GM10248 (cell line): ENCODE measurements at regions of chr16 and their contacts with region 1.

Region 1: GRCh38 chr16:714558-715476 is at the start of gene METRN:
- DNase-seq: peak; percentile 92
- CTCF ChIP-seq: no peak

Region 2: GRCh38 chr16:700684-701584 is 13.9 kb before region 1 on chr16:
- CTCF ChIA-PET with region 1: interaction called, 13 read pairs
- POLR2A ChIA-PET with region 1: no interaction called
- DNase-seq: peak; percentile 54
- CTCF ChIP-seq: no peak

Region 3: DNA sequence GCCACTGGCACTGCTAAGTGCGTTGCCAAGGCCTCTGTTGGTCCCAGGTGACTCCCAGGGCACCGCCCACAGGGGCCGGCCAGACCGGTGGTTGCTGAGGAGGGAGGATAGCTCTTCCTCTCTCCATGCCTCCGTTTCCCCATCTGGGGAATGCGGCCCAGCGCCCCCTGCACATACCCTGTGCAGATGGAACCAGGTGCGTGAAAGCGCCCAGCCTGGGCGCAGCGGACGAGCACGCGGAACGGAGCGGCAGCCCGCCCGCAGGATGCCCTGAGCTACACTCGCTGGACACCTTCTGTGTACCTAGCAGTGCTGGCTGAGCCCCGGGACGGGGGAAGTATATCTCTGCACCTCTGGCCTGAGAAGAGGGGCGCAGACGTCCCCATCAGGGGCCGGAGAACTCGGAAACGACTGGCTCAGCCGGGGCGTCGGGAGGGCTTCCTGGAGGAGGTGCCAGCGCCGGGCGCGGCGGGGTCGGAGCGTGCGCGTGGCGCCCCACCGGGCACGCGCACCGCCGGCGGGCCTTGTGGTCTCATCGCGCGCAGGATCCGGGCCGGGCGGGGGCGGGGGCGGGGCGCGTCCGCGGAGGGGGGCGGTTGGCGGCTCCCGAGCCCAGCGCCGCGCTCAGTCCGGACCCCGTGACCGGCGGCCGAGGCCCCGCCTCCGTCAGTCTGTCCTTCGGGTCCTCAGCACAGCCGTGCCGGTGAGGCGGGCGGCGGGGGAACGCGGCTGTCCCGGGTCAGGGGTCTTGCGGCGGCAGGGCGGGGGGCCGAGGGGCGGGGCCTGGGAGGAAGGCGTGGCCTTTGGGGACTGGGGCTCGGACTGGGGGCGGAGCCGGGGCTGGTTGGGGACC is 11.8 kb after region 1 on chr16 and contains the starts of genes CCDC78 and HAGHL:
- CTCF ChIA-PET with region 1: interaction called, 59 read pairs
- POLR2A ChIA-PET with region 1: no interaction called
- DNase-seq: peak; percentile 81
- CTCF ChIP-seq: no peak

Region 4: DNA sequence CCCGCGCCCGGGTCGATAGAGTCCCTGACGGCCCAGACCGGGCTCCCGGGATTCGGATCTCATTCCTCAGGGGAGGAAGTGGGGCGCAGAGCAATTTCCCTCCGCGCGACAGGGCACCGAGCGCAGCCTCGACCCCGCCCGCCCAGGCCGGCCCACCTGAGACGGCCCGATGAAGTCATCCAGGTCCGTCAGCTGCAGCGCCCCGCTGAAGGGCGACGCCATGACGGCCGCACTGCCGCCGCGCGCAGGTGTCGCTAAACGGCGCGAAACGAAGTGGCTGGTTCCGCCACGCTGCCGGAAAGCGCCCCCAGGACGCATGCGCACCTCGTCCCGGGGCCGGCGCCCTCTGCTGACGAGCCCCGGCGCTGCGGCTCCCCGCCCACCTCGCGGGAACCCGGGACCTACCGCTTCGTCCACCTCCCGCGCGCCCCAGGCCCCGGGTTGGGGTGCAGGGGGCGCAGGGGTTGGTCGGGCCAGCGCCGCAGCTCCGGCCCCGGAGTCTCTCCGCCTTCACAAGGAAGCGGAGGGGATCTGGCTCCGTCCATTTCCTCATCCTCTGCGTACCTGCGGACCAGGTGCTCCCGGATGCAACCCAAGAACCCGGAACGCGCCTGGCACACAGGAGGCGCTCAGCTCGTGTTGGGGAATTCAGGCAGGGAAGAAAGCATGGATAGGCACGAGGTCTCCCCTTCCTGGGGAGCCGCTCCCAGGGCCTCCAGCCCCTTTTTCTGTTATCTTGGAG is 26.1 kb after region 1 on chr16 and contains the start of gene CIAO3:
- CTCF ChIA-PET with region 1: interaction called, 31 read pairs
- POLR2A ChIA-PET with region 1: no interaction called
- DNase-seq: peak; percentile 95
- CTCF ChIP-seq: peak; percentile 96

Region 5: GRCh38 chr16:788394-789126 is 73.7 kb after region 1 on chr16 and contains the start of gene CHTF18:
- CTCF ChIA-PET with region 1: interaction called, 169 read pairs
- POLR2A ChIA-PET with region 1: interaction called, 5 read pairs
- DNase-seq: peak; percentile 100
- CTCF ChIP-seq: no peak

Region 6: DNA sequence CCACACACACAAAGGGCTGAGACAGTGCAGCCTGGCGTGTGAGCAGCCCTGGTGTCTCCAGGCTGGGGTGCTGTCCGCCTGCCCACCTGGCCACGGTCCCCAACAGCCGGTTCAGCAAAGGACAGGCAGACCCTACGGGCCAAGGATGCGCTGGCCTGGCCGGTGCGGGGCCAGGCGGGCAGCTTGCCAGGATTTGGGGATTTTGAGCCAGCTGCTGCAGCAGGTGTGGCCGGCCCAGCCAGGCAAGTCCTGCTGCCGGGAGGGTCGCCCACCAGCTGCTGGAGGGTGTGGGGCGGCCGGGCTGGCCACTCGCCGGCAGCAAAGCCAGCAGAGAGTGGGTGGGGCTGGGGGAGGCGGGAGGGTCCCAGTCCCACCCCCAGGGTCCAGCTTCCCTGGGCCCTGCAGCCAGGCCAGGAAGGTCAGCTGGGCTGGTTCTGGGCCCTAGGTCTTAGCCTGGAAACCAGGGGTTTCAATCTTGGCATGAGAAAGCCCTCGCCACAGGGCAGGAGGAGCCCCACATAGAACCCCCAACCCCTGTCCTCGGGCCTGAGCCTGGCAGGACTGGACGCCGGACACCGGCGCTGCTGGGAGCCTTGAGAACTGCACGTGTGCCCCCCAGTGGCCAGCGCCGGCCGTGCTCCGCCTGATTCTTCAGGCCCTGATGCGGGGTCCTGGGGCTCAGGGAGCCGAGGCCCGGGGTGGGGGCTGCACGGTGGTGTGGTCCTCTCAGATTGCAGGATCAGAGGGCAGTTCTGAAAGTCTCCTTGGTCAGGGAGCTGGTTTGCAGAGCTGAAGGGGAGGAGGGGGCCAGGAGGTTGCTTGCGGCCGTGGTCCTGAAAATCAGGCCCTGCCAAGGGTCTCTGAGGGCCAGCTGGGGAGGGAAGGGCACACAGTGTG is 340.1 kb after region 1 on chr16:
- CTCF ChIA-PET with region 1: interaction called, 11 read pairs
- POLR2A ChIA-PET with region 1: no interaction called
- DNase-seq: peak; percentile 72
- CTCF ChIP-seq: peak; percentile 73